ENCODE measurements at regions of chr14 and their contacts with region 1.

Region 1: GRCh38 chr14:64540208-64541157 is at the start of gene HSPA2:
- DNase-seq: peak; percentile 99
- H3K4me3 ChIP-seq: peak within 1 kb of the TSS; percentile 46 to 55
- H3K27ac ChIP-seq: peak within 1 kb of the TSS; percentile 80 to 90
- H3K4me1 ChIP-seq: no peaks in the 10 kb centered on the region
- H3K27me3 ChIP-seq: no peaks in the 10 kb centered on the region
- CTCF ChIP-seq: peak; percentile 88 to 96 (median 93)
- POLR2A ChIP-seq: peak; percentile 78 to 98
- total RNA-seq, gene HSPA2: 21.8 to 68.1 (median 26.8) TPM

Region 2: GRCh38 chr14:64636208-64636979 is 95.9 kb after region 1 on chr14:
- intact Hi-C with region 1: loop called (anchors 10 kb)
- DNase-seq: peak; percentile 73 to 82
- H3K4me3 ChIP-seq: no peak overlapping the region
- H3K27ac ChIP-seq: no peak overlapping the region
- H3K4me1 ChIP-seq: no peaks in the 10 kb centered on the region
- H3K27me3 ChIP-seq: no peaks in the 10 kb centered on the region
- CTCF ChIP-seq: peak; percentile 87 to 94 (median 90)
- POLR2A ChIP-seq: no peak

Measured in uterus (tissue), 4 donors.